Naive thymus-derived CD8-positive, alpha-beta T cell (primary cell): ENCODE measurements at regions of chr15 and their contacts with region 1.

Region 1: GRCh38 chr15:78131295-78132061 is at the start of gene CIB2:
- DNase-seq: peak; percentile 68 to 87 (median 80)
- ATAC-seq: peak; percentile 79 to 81
- H3K4me3 Mint-ChIP-seq: peak within 1 kb of the TSS; percentile 77 to 89 (median 84)
- H3K27ac Mint-ChIP-seq: peak within 1 kb of the TSS; percentile 83 to 96 (median 94)
- H3K4me1 Mint-ChIP-seq: peaks cover 16 to 47% (median 33%) of the 10 kb centered on the region in 4 donors
- H3K27me3 Mint-ChIP-seq: no peaks in the 10 kb centered on the region
- polyA plus RNA-seq, gene CIB2: 1.4 to 3.4 (median 2.5) TPM

Region 2: GRCh38 chr15:78149068-78149804 is 17.8 kb after region 1 on chr15 and contains the start of gene IDH3A:
- POLR2A ChIA-PET with region 1: interaction called, 29 read pairs
- DNase-seq: peak; percentile 96 to 100 (median 99)
- ATAC-seq: peak; percentile 87 to 94
- H3K4me3 Mint-ChIP-seq: peak within 1 kb of the TSS; percentile 88 to 97 (median 94)
- H3K27ac Mint-ChIP-seq: peak within 1 kb of the TSS; percentile 91 to 97 (median 94)
- H3K4me1 Mint-ChIP-seq: peaks cover 25 to 50% (median 42%) of the 10 kb centered on the region in 4 donors
- H3K27me3 Mint-ChIP-seq: no peaks in the 10 kb centered on the region
- polyA plus RNA-seq, gene IDH3A: 40.1 to 46.3 (median 42.3) TPM